AG04449 (cell line): ENCODE measurements at regions of chr21 and their contacts with region 1.

Region 1: DNA sequence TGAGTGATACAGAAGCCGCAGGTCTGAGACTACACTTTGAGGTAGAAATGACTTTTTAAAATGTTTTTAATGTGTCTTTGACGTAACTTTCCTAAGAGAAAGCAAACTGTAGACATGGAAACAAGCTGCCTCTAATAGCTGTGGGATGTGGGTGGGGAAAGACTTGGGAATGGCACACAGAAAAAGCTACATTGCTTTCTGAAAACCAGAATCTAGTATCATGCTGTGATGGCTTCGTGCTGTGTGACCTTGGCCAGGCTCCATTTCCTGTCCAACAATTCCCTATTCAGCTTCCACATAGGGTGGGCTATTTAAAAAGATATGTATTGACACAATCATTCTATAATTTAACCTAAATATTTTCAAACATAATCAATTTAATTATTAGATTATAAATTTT is 909.1 kb downstream of the NCAM2 start:
- DNase-seq: no peak
- H3K4me3 ChIP-seq: no peak overlapping the region
- CTCF ChIP-seq: no peak

Region 2: GRCh38 chr21:21751286-21751685 is 156.0 kb before region 1 on chr21:
- CTCF ChIA-PET with region 1: no interaction called
- POLR2A ChIA-PET with region 1: no interaction called
- DNase-seq: no peak
- H3K4me3 ChIP-seq: no peak overlapping the region
- CTCF ChIP-seq: no peak

Region 3: DNA sequence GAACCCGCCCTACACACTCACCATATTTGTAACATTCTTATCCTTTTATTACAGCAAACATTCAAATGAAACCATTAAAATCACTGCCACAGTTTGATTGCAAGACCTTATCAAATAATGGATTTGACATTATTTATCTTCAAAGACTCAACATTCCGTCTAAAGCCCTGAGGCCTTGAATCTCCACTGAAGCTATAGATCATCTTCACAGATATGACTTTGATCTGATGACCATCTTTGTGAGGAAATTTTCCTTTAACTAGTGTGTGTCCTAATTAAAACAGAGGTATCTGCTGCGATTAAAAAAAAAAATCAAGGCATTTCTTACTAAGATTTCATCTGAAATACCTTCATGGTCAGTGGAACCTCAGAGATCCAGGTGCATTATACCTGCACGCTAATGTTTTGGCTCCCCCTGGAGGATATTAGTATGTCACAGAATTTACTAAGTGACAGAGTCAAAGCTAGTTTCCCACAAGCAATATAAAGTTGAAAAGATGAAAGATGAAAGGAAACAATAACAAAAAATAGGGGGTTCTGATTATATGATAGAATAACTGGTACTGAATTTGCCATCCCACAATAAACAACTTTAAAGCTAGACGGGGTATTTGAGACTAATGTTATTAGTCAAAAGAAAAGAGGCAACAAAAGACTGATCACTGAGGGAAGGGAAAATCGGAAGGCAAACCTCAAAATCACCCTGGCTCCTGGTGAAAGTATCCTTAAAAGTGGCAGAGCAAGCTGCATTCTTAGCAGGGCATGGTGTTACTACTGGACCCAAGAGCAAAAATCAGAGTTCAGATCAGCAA is 14.4 kb after region 1 on chr21:
- CTCF ChIA-PET with region 1: interaction called, 10 read pairs
- POLR2A ChIA-PET with region 1: no interaction called
- DNase-seq: no peak
- H3K4me3 ChIP-seq: no peak overlapping the region
- CTCF ChIP-seq: peak; percentile 39

Region 4: GRCh38 chr21:22046576-22046975 is 139.3 kb after region 1 on chr21:
- CTCF ChIA-PET with region 1: no interaction called
- POLR2A ChIA-PET with region 1: no interaction called
- DNase-seq: no peak
- H3K4me3 ChIP-seq: no peak overlapping the region
- CTCF ChIP-seq: no peak